Endothelial cell of umbilical vein (primary cell): ENCODE measurements at regions of chr11 and their contacts with region 1.

Region 1: GRCh38 chr11:101914738-101915426 is at the start of gene CEP126:
- DNase-seq: peak; percentile 99
- H3K4me3 ChIP-seq: peak within 1 kb of the TSS; percentile 13 to 81 (median 73)
- H3K27ac ChIP-seq: peak within 1 kb of the TSS; percentile 100
- H3K4me1 ChIP-seq: peaks cover 42% of the 10 kb centered on the region
- H3K27me3 ChIP-seq: no peaks in the 10 kb centered on the region
- CTCF ChIP-seq: peak; percentile 32 to 59
- POLR2A ChIP-seq: peak; percentile 79
- total RNA-seq, gene CEP126: 5.8 and 9.1 TPM in 2 replicates

Region 2: GRCh38 chr11:101880222-101880621 is 34.7 kb before region 1 on chr11:
- CTCF ChIA-PET with region 1: interaction called, 12 read pairs
- POLR2A ChIA-PET with region 1: no interaction called
- dilution Hi-C with region 1: no loop called
- intact Hi-C with region 1: no loop called
- DNase-seq: peak; percentile 61
- H3K4me3 ChIP-seq: no peak overlapping the region
- H3K27ac ChIP-seq: no peak overlapping the region
- H3K4me1 ChIP-seq: no peaks in the 10 kb centered on the region
- H3K27me3 ChIP-seq: no peaks in the 10 kb centered on the region
- CTCF ChIP-seq: peak; percentile 37 to 53
- POLR2A ChIP-seq: no peak

Region 3: GRCh38 chr11:102109896-102110760 is 195.2 kb after region 1 on chr11 and contains the start of gene YAP1:
- CTCF ChIA-PET with region 1: no interaction called
- POLR2A ChIA-PET with region 1: no interaction called
- dilution Hi-C with region 1: no loop called
- intact Hi-C with region 1: loop called (anchors 1 kb)
- DNase-seq: peak; percentile 89
- H3K4me3 ChIP-seq: peak within 1 kb of the TSS; percentile 85 to 99 (median 88)
- H3K27ac ChIP-seq: peak within 1 kb of the TSS; percentile 72
- H3K4me1 ChIP-seq: peaks cover 11% of the 10 kb centered on the region
- H3K27me3 ChIP-seq: peaks cover 2 to 18% of the 10 kb centered on the region in 2 experiments
- CTCF ChIP-seq: no peak
- POLR2A ChIP-seq: no peak
- total RNA-seq, gene YAP1: 36.5 and 48.9 TPM in 2 replicates

Region 4: GRCh38 chr11:102495161-102496042 is 580.5 kb after region 1 on chr11:
- CTCF ChIA-PET with region 1: no interaction called
- POLR2A ChIA-PET with region 1: no interaction called
- dilution Hi-C with region 1: no loop called
- intact Hi-C with region 1: loop called (anchors 1 kb)
- DNase-seq: peak; percentile 77
- H3K4me3 ChIP-seq: no peak overlapping the region
- H3K27ac ChIP-seq: no peak overlapping the region
- H3K4me1 ChIP-seq: peaks cover 13% of the 10 kb centered on the region
- H3K27me3 ChIP-seq: no peaks in the 10 kb centered on the region
- CTCF ChIP-seq: peak; percentile 30 to 51
- POLR2A ChIP-seq: no peak